Posterior vena cava (tissue), 2 donors: ENCODE measurements at regions of chr7 and their contacts with region 1.

Region 1: GRCh38 chr7:151172273-151173141 is 5.0 kb upstream of the GBX1 start:
- DNase-seq: peak; percentile 95

Region 2: GRCh38 chr7:151123822-151124464 is 48.6 kb before region 1 on chr7:
- intact Hi-C with region 1: loop called (anchors 2 to 5 kb)
- DNase-seq: peak; percentile 94

Region 3: GRCh38 chr7:152451356-152452150 is 1279.0 kb after region 1 on chr7:
- intact Hi-C with region 1: no loop called
- DNase-seq: no peak